ENCODE measurements at regions of chr1 and their contacts with region 1.

Region 1: GRCh38 chr1:55868026-55868425 is 652.9 kb upstream of the USP24 start:
- DNase-seq: no peak
- ATAC-seq: peak in 2 of 8 donors; percentile 25 to 50
- H3K4me3 ChIP-seq: no peak overlapping the region
- H3K27ac ChIP-seq: peak overlapping the region in 1 of 10 donors; percentile 17
- H3K4me1 ChIP-seq: peaks cover 0 to 20% (median 5%) of the 10 kb centered on the region in 9 donors
- H3K27me3 ChIP-seq: no peaks in the 10 kb centered on the region
- CTCF ChIP-seq: peak in 1 of 9 donors; percentile 21

Region 2: GRCh38 chr1:55882931-55883330 is 14.9 kb after region 1 on chr1:
- intact Hi-C with region 1: loop called in 1 of 10 experiments (anchors 1 kb)
- DNase-seq: no peak
- ATAC-seq: no peak
- H3K4me3 ChIP-seq: no peak overlapping the region
- H3K27ac ChIP-seq: no peak overlapping the region
- H3K4me1 ChIP-seq: no peaks in the 10 kb centered on the region
- H3K27me3 ChIP-seq: no peaks in the 10 kb centered on the region
- CTCF ChIP-seq: no peak

Measured in heart right ventricle (tissue), 16 donors.